BJ (cell line): ENCODE measurements at regions of chr15 and their contacts with region 1.

Region 1: DNA sequence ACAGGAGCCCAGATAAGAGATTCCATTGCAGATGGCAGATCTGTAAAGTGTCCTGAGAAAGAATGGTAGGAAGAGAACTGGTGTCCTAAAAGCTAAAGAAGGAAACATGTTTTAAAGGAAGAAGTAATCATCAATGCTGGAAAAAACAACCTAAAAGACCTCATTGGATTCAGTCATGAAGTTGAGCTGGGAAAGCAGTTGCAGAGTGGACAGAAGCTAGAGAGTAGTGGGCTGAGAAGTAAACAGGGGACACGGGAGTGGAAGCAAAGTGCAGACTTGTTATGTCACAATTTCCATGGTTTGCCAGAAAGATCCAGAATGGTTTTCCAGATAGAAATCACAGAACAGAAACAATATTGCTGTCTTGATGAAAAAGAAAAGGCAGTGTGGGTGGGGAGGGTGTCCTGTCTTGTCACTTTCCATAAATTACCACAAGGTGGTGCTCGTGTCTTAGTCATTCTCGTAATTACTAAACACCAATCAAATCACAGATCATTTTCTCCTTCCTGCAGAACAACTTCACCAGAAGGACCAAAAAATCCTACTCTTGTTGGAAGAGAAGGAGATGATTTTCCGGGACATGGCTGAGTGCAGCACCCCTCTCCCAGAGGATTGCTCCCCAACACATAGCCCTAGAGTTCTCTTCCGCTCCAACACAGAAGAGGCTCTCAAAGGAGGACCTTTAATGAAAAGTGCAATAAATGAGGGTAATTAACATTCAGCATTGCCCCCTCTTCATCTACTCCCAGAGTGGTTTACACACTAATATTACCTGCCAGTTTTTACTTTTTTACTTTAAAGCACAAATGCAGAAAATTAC is 64.5 kb downstream of the KLHL25 start:
- DNase-seq: no peak
- H3K4me3 ChIP-seq: no peak overlapping the region
- H3K27me3 ChIP-seq: no peaks in the 10 kb centered on the region
- CTCF ChIP-seq: peak; percentile 60

Region 2: GRCh38 chr15:84699538-84700191 is 1030.5 kb before region 1 on chr15:
- CTCF ChIA-PET with region 1: no interaction called
- POLR2A ChIA-PET with region 1: no interaction called
- DNase-seq: no peak
- H3K4me3 ChIP-seq: no peak overlapping the region
- H3K27me3 ChIP-seq: no peaks in the 10 kb centered on the region
- CTCF ChIP-seq: no peak

Region 3: DNA sequence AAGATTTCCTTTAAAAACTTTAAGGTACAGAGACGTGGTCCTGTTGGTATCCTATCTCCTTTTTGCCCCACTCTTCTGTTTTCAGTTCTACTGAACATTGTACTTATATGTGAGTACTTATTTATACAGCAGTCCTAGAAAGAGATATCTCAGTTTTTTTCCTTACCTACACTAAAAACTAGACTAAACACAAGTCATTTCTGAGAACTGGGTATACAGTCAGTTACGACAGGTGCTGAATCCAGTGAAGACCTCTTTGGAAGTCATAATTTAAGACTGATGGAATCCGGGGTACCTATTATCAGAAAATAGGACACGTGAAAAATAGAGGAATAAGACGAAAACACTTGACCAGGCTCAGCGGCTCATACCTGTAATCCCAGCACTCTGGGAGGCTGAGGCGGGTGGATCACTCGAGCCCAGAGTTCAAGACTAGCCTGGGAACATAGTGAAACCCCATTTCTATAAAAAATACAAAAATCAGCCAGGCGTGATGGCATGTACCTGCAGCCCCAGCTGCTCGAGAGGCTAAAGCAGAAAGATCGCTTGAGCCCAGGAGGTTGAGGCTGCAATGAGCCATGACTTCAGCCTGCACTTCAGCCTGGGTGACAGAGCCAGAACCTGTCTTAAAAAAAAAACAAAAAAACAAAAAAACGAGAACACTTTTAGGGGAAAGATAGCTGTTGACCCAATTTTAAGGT is 11.8 kb before region 1 on chr15:
- CTCF ChIA-PET with region 1: no interaction called
- POLR2A ChIA-PET with region 1: no interaction called
- DNase-seq: no peak
- H3K4me3 ChIP-seq: no peak overlapping the region
- H3K27me3 ChIP-seq: no peaks in the 10 kb centered on the region
- CTCF ChIP-seq: no peak

Region 4: DNA sequence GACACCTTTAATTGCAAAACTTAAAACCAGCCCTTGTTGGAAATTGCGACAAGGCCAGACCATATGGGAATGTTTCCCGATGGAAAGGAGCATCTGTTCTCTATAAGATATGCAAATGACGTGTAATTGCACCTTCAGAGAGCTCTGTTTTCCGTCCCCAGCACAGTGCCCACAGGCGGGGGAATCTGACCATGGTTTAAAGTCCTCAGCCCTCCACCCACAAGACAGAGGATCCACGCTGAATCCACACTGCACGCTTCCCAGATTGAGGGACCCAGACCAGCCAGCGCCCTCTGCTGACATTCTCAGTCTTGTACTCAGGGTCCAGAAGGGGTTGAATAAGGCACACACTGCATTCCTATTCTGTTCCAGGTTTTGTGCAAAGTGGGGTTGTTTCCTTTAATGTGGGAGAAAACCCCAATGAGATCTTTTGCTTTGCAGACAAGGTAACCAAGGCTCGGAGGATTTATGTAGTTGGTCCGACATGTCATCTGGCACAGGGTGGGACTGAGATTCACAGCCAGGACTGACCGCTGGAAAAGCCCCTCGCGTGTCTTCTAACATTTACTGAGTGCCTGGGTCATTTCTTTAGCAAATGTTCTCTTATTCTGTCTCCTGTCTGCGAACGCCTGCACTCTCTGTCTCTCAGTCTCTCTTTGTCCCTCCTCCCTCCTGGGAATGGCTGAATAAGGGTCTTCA is 101.4 kb after region 1 on chr15:
- CTCF ChIA-PET with region 1: interaction called, 26 read pairs
- POLR2A ChIA-PET with region 1: no interaction called
- DNase-seq: no peak
- H3K4me3 ChIP-seq: no peak overlapping the region
- H3K27me3 ChIP-seq: peaks cover 4% of the 10 kb centered on the region; the same call in 1 of the 2 replicates
- CTCF ChIP-seq: peak; percentile 84

Region 5: GRCh38 chr15:85840065-85840801 is 110.0 kb after region 1 on chr15:
- CTCF ChIA-PET with region 1: interaction called, 49 read pairs
- POLR2A ChIA-PET with region 1: no interaction called
- DNase-seq: no peak
- H3K4me3 ChIP-seq: peak overlapping the region; percentile 38
- H3K27me3 ChIP-seq: peaks cover 1% of the 10 kb centered on the region; the same call in 1 of the 2 replicates
- CTCF ChIP-seq: peak; percentile 88